AG04450 (cell line): ENCODE measurements at regions of chr16 and their contacts with region 1.

Region 1: DNA sequence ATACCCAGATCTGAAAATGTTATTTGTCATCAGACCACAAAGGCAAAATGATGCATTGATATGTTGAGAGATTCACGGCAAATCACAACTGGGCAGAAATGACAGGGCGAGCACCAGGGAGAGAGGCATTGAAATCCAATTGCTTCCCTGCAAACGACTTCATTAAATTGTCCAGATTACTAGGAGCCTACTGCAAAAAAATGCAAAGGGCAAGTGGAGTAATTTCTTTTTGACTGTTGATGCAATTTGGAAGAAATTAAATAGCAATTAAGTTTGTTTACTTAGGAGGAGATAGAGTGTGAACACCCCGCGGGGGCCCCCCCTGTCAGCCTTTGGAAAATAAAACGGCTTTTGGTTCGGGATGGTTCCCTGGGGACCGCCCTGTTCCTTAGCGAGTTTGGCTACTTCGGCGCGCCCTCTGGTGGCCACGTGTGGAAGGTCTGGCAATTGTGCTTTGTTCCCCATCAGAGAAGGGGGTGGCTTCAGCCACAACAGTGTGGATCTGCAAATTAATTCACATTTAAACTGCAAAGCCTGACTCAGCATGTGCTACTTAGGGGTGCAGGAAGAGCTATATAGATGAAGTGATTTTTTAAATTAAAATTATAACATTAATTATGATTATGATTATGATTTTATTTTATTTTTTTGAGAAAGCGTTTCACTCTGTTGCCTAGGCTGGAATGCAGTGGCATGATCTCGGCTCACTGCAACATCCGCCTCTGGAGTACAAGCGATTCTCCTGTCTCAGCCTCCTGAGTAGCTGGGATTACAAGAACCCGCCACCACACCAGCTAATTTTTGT is 14.5 kb upstream of the TMC7 start:
- DNase-seq: peak; percentile 23
- H3K4me3 ChIP-seq: peak overlapping the region; percentile 38
- H3K27ac ChIP-seq: no peak overlapping the region
- H3K27me3 ChIP-seq: peaks cover 4% of the 10 kb centered on the region
- CTCF ChIP-seq: peak; percentile 93

Region 2: DNA sequence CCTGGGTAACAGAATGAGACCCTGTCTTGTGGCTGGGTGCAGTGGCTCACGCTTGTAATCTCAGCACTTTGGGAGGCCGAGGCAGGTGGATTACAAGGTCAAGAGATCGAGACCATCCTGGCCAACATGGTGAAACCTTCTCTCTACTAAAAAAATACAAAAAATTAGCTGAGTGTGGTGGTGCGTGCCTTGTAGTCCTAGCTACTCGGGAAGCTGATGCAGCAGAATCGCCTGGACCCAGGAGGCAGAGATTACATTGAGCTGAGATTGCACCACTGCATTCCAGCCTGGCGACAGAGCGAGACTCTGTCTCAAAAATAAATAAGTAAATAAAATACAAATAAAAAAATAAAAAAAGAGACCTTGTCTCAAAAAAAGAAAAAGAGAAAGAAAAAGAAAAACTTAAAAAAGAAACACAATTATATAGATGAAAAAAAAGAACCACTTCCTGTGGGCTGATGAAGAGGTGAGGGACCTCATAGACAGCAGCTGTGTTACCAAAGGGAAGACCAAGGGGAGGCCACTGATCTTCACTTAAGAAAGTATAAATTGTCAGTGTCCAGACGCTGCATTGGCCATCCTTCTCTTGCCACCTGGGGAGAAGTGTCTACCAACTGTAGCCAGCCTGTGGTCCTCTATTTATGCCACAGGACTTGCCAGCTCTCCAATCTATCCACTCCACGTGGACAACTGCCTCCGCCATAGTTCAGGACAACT is 18.6 kb before region 1 on chr16:
- CTCF ChIA-PET with region 1: interaction called, 44 read pairs
- POLR2A ChIA-PET with region 1: no interaction called
- DNase-seq: no peak
- H3K4me3 ChIP-seq: no peak overlapping the region
- H3K27ac ChIP-seq: no peak overlapping the region
- H3K27me3 ChIP-seq: no peaks in the 10 kb centered on the region
- CTCF ChIP-seq: no peak

Region 3: DNA sequence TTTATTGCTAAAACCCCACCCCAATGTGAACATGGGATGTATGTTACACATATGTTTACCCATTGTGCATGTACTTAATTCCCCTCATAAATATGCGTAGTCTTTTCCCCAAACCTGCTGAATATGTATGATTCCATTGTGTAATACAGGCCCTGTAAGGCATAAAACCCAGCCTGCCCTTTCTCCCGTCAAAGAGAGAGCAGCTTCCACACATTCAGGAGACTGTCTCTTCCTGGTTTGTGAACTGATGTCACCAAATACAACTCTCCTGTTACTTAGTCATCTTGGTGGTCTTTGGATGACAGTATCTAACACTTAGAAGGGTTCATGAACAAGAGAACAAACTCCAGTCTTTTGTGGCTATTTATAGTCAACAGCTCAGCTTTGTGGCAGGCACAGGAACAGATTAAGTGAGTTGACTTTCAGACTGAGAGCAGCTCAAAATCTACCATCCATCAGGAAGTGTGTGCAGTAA is 10.2 kb before region 1 on chr16:
- CTCF ChIA-PET with region 1: interaction called, 44 read pairs
- POLR2A ChIA-PET with region 1: no interaction called
- DNase-seq: no peak
- H3K4me3 ChIP-seq: no peak overlapping the region
- H3K27ac ChIP-seq: no peak overlapping the region
- H3K27me3 ChIP-seq: peaks cover 4% of the 10 kb centered on the region
- CTCF ChIP-seq: no peak

Region 4: GRCh38 chr16:18983565-18984424 is 14.5 kb after region 1 on chr16 and contains the start of gene TMC7:
- CTCF ChIA-PET with region 1: interaction called, 38 read pairs
- POLR2A ChIA-PET with region 1: no interaction called
- DNase-seq: peak; percentile 50
- H3K4me3 ChIP-seq: peak within 1 kb of the TSS; percentile 58
- H3K27ac ChIP-seq: no peak within 1 kb of the TSS
- H3K27me3 ChIP-seq: no peaks in the 10 kb centered on the region
- CTCF ChIP-seq: peak; percentile 78
- polyA plus RNA-seq, gene TMC7: 0.37 and 0.42 TPM in 2 replicates